Activated B cell treated with CpG ODN at 0.5 μM for 24 hours (primary cell): ENCODE measurements at regions of chr6 and their contacts with region 1.

Region 1: GRCh38 chr6:26553635-26554446 is 15.7 kb downstream of the HMGN4 start:
- DNase-seq: peak; percentile 67
- ATAC-seq: peak; percentile 46
- H3K4me3 Mint-ChIP-seq: no peak overlapping the region
- H3K27ac Mint-ChIP-seq: no peak overlapping the region
- H3K4me1 Mint-ChIP-seq: peaks cover 28% of the 10 kb centered on the region
- H3K27me3 Mint-ChIP-seq: no peaks in the 10 kb centered on the region
- CTCF ChIP-seq: no peak

Region 2: DNA sequence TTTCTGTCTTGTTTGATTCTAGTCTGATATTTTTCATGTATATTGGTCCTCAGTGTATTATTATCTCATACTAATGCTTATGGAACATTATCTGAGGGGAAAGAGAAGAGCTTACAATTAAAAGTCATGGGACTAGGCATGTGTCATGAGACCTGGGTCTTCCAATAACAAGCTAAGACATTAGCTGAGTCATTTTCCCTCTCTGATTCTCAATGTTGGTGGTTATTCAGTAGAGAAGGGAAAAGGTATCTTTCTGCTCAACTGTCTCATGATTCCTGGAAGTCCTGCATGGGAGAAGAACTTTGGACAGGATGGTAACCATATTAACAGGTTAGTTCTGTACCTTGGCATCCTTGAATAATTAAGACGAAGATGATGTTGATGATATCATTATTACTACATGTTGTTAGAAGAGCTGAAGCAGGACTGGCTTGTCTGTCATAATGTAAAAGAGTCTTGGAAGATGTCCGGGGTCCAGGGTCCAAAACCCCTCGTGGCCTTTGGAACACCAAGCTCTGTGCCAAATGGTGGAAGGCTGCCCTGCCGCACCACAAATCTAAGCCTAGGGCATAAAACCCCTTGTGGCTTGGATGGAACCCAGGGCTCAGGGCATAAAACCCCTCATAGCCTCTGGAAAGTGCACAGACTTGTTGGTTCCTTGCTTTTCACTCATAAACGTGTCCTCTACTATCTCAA is 572.1 kb before region 1 on chr6:
- CTCF ChIA-PET with region 1: no interaction called
- POLR2A ChIA-PET with region 1: no interaction called
- intact Hi-C with region 1: no loop called
- DNase-seq: no peak
- ATAC-seq: no peak
- H3K4me3 Mint-ChIP-seq: no peak overlapping the region
- H3K27ac Mint-ChIP-seq: peak overlapping the region; percentile 75
- H3K4me1 Mint-ChIP-seq: peaks cover 27% of the 10 kb centered on the region
- H3K27me3 Mint-ChIP-seq: no peaks in the 10 kb centered on the region
- CTCF ChIP-seq: no peak

Region 3: DNA sequence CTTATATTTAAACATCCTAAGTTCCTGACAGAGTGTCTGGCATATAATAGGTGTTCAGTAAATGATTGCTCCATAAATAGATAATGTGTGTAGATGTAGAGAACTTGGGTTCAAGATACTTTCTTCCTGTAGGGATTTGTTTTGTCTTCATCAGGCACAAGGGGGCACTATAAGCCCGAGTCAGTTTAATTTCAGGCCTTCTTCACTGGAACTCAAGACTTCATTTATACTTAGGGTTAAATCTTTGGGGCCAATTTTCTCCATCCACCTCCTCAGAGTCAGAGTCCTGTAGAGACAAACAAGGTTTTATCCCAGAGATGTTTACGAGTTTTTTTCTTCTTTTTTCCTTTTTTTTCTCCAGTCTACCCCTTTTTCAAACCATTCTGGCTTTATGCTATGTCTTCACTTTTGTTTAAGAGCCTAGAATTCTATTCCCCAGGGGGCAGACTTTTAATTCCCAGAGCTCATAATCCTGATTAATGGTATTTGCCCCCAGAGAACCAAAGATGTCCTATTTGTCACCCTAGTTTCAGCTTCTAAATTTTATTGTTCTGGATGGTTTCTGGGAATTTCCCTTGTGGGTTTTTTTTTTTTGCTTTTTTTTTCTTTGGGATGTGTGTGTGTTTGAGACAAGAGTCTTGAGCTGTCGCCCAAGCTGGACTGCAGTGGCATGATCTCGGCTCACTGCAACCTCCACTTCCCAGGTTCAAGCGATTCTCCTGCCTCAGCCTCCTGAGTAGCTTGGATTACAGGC is 378.2 kb before region 1 on chr6:
- CTCF ChIA-PET with region 1: no interaction called
- POLR2A ChIA-PET with region 1: no interaction called
- intact Hi-C with region 1: loop called (anchors 5 kb)
- DNase-seq: no peak
- ATAC-seq: no peak
- H3K4me3 Mint-ChIP-seq: no peak overlapping the region
- H3K27ac Mint-ChIP-seq: peak overlapping the region; percentile 65
- H3K4me1 Mint-ChIP-seq: peaks cover 38% of the 10 kb centered on the region
- H3K27me3 Mint-ChIP-seq: no peaks in the 10 kb centered on the region
- CTCF ChIP-seq: no peak

Region 4: DNA sequence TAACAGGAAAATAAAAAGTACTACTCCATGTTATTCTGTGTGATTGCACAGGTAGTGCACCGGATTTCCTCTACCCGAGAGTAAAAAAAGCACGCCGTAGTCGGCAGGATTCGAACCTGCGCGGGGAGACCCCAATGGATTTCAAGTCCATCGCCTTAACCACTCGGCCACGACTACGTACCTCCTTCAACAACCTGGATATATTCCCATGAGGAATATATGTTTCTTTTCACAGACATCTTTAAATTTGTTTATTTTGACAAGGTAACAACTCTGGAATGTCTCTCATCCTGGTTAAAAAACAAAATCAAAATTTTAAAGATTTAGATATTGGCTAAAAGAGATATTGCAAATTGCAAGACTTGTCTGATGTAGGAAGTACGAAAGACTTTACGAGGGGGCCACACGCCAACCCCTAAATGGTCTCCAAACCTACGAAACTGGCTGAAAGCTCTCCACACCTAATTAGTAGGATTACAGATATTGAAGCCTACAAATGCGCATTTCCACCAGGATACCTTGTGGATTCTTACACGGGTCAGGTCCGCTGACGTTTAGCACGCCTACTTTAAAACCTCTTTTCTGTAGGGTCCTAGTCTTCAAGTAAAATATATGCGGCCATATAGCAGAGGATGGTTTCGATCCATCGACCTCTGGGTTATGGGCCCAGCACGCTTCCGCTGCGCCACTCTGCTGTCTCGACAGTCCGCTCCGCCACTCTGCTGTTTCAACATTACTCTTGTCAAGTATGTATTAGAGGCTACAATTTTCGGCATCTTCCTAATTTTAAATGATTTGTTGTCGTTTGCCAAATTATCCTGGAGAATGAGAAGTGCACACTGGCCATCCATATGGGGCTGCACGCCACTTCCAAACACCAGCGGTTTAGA is 241.1 kb before region 1 on chr6:
- CTCF ChIA-PET with region 1: no interaction called
- POLR2A ChIA-PET with region 1: no interaction called
- intact Hi-C with region 1: loop called (anchors 1 kb)
- DNase-seq: peak; percentile 63
- ATAC-seq: peak; percentile 79
- H3K4me3 Mint-ChIP-seq: peak overlapping the region; percentile 90
- H3K27ac Mint-ChIP-seq: peak overlapping the region; percentile 95
- H3K4me1 Mint-ChIP-seq: peaks cover 28% of the 10 kb centered on the region
- H3K27me3 Mint-ChIP-seq: peaks cover 5% of the 10 kb centered on the region
- CTCF ChIP-seq: no peak

Region 5: GRCh38 chr6:26342106-26343004 is 211.5 kb before region 1 on chr6:
- CTCF ChIA-PET with region 1: no interaction called
- POLR2A ChIA-PET with region 1: no interaction called
- intact Hi-C with region 1: loop called (anchors 1 kb)
- DNase-seq: no peak
- ATAC-seq: no peak
- H3K4me3 Mint-ChIP-seq: no peak overlapping the region
- H3K27ac Mint-ChIP-seq: no peak overlapping the region
- H3K4me1 Mint-ChIP-seq: peaks cover 9% of the 10 kb centered on the region
- H3K27me3 Mint-ChIP-seq: peaks cover 40% of the 10 kb centered on the region
- CTCF ChIP-seq: no peak

Region 6: GRCh38 chr6:26520853-26521599 is 32.8 kb before region 1 on chr6:
- CTCF ChIA-PET with region 1: no interaction called
- POLR2A ChIA-PET with region 1: interaction called, 15 read pairs
- intact Hi-C with region 1: loop called (anchors 1 kb)
- DNase-seq: peak; percentile 78
- ATAC-seq: peak; percentile 72
- H3K4me3 Mint-ChIP-seq: peak overlapping the region; percentile 87
- H3K27ac Mint-ChIP-seq: peak overlapping the region; percentile 92
- H3K4me1 Mint-ChIP-seq: peaks cover 43% of the 10 kb centered on the region
- H3K27me3 Mint-ChIP-seq: peaks cover 1% of the 10 kb centered on the region
- CTCF ChIP-seq: no peak

Region 7: GRCh38 chr6:26537846-26538571 is 15.8 kb before region 1 on chr6 and contains the start of gene HMGN4:
- CTCF ChIA-PET with region 1: interaction called, 10 read pairs
- POLR2A ChIA-PET with region 1: interaction called, 58 read pairs
- intact Hi-C with region 1: loop called (anchors 1 kb)
- DNase-seq: peak; percentile 73
- ATAC-seq: peak; percentile 67
- H3K4me3 Mint-ChIP-seq: peak within 1 kb of the TSS; percentile 98
- H3K27ac Mint-ChIP-seq: peak within 1 kb of the TSS; percentile 97
- H3K4me1 Mint-ChIP-seq: peaks cover 65% of the 10 kb centered on the region
- H3K27me3 Mint-ChIP-seq: peaks cover 7% of the 10 kb centered on the region
- CTCF ChIP-seq: no peak
- total RNA-seq, gene HMGN4: 74.5 and 82.2 TPM in 2 replicates

Region 8: DNA sequence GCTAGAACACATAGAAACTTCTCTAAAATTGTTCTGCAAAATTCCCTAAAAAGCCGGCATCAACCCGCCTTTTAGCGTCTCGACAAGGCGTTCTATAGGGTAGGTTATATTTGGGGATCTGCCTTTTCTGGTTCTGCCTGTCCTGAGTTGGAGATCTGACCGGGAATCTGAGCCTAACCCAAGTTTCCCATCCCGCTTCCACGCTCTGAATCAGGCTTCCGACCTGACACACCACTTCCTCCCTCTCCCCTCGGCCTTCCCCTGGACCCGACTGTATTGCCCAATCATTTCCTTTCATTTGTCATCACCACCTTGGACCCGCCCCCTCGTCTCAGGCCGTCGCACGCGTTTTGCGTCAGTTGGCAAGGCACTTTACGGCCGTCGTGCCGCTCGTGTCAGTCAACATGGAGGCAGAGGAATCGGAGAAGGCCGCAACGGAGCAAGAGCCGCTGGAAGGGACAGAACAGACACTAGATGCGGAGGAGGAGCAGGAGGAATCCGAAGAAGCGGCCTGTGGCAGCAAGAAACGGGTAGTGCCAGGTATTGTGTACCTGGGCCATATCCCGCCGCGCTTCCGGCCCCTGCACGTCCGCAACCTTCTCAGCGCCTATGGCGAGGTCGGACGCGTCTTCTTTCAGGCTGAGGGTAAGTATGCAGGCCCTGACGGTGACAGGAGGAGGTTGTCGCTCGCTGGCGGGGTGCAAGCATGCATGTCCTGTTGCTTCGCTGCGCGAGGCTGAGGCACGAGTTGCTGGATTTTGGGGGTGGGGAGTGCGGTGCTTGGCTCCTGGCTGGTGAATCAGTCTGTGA is 42.9 kb after region 1 on chr6 and contains the start of gene ABT1:
- CTCF ChIA-PET with region 1: interaction called, 9 read pairs
- POLR2A ChIA-PET with region 1: interaction called, 5 read pairs
- intact Hi-C with region 1: loop called (anchors 1 kb)
- DNase-seq: peak; percentile 91
- ATAC-seq: peak; percentile 90
- H3K4me3 Mint-ChIP-seq: no peak within 1 kb of the TSS
- H3K27ac Mint-ChIP-seq: no peak within 1 kb of the TSS
- H3K4me1 Mint-ChIP-seq: peaks cover 17% of the 10 kb centered on the region
- H3K27me3 Mint-ChIP-seq: peaks cover 5% of the 10 kb centered on the region
- CTCF ChIP-seq: no peak
- total RNA-seq, gene ABT1: 30.7 and 30.8 TPM in 2 replicates